Pancreas (tissue), 10 donors: ENCODE measurements at regions of chr6 and their contacts with region 1.

Region 1: DNA sequence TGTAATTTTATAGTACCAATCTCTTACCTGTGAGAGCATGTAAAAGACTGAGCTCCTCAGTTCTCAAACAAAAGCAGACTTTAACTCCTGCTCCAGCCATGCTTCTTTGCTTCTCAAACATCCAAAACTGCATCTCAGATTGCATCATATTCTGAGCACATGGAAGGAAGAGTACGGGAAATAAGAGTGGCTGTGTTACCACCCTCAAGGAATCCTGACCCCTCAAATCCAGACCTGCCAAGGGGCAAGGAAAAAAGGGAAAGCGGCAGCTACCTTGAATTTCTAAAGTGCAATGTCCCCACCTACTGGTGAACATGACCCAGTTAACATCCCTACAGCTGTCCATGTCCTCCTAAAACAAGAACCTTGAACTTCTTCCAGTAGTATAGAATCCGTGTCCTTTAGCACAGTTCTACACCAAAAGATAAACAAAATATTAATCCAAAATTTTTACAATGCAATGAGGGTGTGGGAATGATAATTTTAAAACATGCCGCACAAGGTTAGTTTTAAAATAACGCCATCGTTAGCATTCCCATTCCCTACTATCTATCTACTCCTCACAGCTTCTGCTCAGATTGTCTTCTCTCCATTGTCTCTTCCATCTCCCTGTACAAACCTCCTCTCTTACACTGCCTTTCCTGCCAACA is 34.1 kb upstream of the HLA-DQB1 start:
- DNase-seq: peak in 3 of 6 donors; percentile 8 to 43 (median 41)
- ATAC-seq: peak in 3 of 4 donors; percentile 76 to 89 (median 88)
- H3K4me3 ChIP-seq: no peak overlapping the region
- H3K27ac ChIP-seq: no peak overlapping the region
- H3K4me1 ChIP-seq: no peaks in the 10 kb centered on the region
- H3K27me3 ChIP-seq: peaks cover 0 to 7% (median 2%) of the 10 kb centered on the region in 4 donors
- CTCF ChIP-seq: peak in 3 of 4 donors; percentile 28 to 61 (median 45)

Region 2: GRCh38 chr6:32424589-32425300 is 275.8 kb before region 1 on chr6:
- intact Hi-C with region 1: loop called in 1 of 3 experiments (anchors 10 kb)
- DNase-seq: no peak
- ATAC-seq: no peak
- H3K4me3 ChIP-seq: no peak overlapping the region
- H3K27ac ChIP-seq: no peak overlapping the region
- H3K4me1 ChIP-seq: no peaks in the 10 kb centered on the region
- H3K27me3 ChIP-seq: no peaks in the 10 kb centered on the region
- CTCF ChIP-seq: no peak

Region 3: GRCh38 chr6:32432050-32432450 is 268.5 kb before region 1 on chr6:
- intact Hi-C with region 1: loop called (anchors 5 to 10 kb)
- DNase-seq: no peak
- ATAC-seq: peak in 1 of 4 donors; percentile 53
- H3K4me3 ChIP-seq: no peak overlapping the region
- H3K27ac ChIP-seq: no peak overlapping the region
- H3K4me1 ChIP-seq: no peaks in the 10 kb centered on the region
- H3K27me3 ChIP-seq: peaks cover 0 to 8% (median 0%) of the 10 kb centered on the region in 4 donors
- CTCF ChIP-seq: peak in 2 of 4 donors; percentile 16 to 19

Region 4: GRCh38 chr6:32472781-32473375 is 227.6 kb before region 1 on chr6:
- intact Hi-C with region 1: no loop called
- DNase-seq: no peak
- ATAC-seq: peak in 2 of 4 donors; percentile 54 to 56
- H3K4me3 ChIP-seq: no peak overlapping the region
- H3K27ac ChIP-seq: no peak overlapping the region
- H3K4me1 ChIP-seq: no peaks in the 10 kb centered on the region
- H3K27me3 ChIP-seq: no peaks in the 10 kb centered on the region
- CTCF ChIP-seq: no peak

Region 5: DNA sequence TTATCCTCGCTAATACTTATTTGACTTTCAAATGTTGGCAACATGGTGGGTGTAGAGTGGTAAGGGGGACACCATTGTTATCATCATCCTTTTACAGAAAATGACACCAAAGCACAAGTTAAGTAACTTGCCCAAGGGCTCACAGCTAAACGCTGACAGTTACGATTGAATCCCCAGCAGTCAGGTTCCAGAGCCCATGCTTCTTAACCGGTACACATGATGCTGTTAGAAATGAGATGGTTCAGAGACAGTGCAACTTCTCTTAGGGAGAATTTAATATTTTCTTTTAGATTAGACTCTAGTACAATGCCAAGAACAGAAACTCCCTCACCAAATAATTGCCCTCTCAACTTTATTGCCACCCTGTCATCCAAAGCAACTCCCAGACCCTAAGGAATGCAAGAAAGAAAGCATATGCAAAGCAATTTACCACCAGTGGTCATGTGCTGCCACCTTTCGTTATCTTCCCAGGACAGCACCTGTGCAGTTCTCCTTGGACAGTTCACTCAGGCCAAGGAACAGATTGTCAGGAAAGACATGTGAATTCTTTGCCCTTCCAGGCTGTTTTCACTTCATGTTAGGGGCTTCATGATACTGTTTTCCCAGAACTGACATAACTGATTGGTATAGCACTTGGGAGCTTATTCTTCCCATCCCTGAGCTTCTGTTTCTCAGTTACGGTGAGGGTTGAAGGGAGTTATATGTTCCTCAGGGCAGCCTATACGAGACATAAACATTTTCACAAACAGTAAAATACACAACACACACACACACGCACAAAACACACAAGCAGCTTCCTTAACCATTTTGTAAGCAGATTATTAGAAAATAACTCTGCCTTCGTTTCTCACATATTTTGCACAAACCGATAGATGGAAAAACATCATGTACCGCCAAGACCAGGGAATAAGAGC is 247.3 kb after region 1 on chr6:
- intact Hi-C with region 1: no loop called
- DNase-seq: peak in 3 of 6 donors; percentile 42 to 51 (median 44)
- ATAC-seq: peak; percentile 68 to 91 (median 78)
- H3K4me3 ChIP-seq: no peak overlapping the region
- H3K27ac ChIP-seq: no peak overlapping the region
- H3K4me1 ChIP-seq: no peaks in the 10 kb centered on the region
- H3K27me3 ChIP-seq: no peaks in the 10 kb centered on the region
- CTCF ChIP-seq: peak; percentile 18 to 66 (median 44)